A673 (cell line): ENCODE measurements at regions of chr15 and their contacts with region 1.

Region 1: DNA sequence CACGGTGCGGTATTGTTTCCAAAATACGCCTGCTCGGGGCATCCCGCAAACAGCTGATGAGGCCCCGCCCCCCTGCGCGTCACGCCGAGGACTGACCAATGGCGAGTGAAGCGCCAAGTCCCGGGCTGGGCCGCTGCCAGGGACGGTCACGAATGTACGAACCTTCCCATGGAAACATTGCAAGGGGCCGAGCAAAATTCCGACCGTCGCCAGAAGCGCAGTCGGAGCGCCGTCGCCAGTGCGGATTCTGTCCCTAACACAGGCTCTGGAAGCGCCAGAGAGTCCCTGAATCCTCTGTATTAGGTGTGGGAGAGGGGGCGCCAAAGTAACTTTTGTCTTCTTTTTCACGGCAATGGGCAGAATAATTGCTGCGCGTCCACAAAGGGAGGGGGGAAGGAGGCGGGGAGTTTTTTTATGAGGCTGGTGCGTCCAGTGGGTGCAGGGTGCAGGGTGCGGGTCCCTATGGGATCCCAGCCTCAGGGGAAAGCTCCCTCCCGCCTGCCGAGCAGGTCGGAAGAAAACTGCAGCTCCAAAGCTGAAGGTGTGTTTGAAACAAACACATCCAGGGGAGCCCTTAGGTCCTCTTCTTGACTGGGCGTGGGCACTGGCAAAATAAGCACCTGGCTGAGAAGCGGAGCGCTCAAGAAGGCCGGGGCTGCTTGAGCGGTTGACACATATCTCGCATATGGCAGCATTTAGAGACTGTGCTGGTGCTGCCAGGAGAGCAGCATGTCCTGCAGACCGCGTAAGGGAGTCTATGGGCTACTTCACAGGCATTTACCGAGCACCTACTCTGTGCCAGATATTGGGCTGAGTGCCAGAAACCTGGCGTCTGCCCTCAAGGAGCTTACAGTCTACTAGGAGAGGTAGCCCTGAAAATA is at the start of gene BMF:
- DNase-seq: peak; percentile 99
- H3K4me3 ChIP-seq: peak within 1 kb of the TSS; percentile 85
- H3K27ac ChIP-seq: peak within 1 kb of the TSS; percentile 75
- H3K4me1 ChIP-seq: peaks cover 38% of the 10 kb centered on the region
- H3K27me3 ChIP-seq: no peaks in the 10 kb centered on the region
- CTCF ChIP-seq: peak; percentile 59
- total RNA-seq, gene BMF: 18.5 and 29.9 TPM in 2 replicates

Region 2: GRCh38 chr15:39968273-39969001 is 140.7 kb before region 1 on chr15:
- CTCF ChIA-PET with region 1: no interaction called
- POLR2A ChIA-PET with region 1: interaction called, 12 read pairs
- intact Hi-C with region 1: no loop called
- DNase-seq: no peak
- H3K4me3 ChIP-seq: no peak overlapping the region
- H3K27ac ChIP-seq: no peak overlapping the region
- H3K4me1 ChIP-seq: peaks cover 12% of the 10 kb centered on the region
- H3K27me3 ChIP-seq: no peaks in the 10 kb centered on the region
- CTCF ChIP-seq: no peak

Region 3: GRCh38 chr15:40160689-40161688 is 51.9 kb after region 1 on chr15 and contains the start of gene BUB1B:
- CTCF ChIA-PET with region 1: no interaction called
- POLR2A ChIA-PET with region 1: no interaction called
- intact Hi-C with region 1: loop called (anchors 5 kb)
- DNase-seq: peak; percentile 97
- H3K4me3 ChIP-seq: peak within 1 kb of the TSS; percentile 81
- H3K27ac ChIP-seq: peak within 1 kb of the TSS; percentile 79
- H3K4me1 ChIP-seq: peaks cover 17% of the 10 kb centered on the region
- H3K27me3 ChIP-seq: no peaks in the 10 kb centered on the region
- CTCF ChIP-seq: no peak
- total RNA-seq, gene BUB1B: 190 and 196 TPM in 2 replicates